PC-3 (cell line): ENCODE measurements at regions of chr14 and their contacts with region 1.

Region 1: GRCh38 chr14:36604757-36605505 is 22.5 kb upstream of the NKX2-8 start:
- DNase-seq: peak; percentile 90
- ATAC-seq: peak; percentile 84
- H3K4me3 ChIP-seq: no peak overlapping the region
- H3K27ac ChIP-seq: no peak overlapping the region
- H3K4me1 ChIP-seq: no peaks in the 10 kb centered on the region
- H3K27me3 ChIP-seq: peaks cover 42% of the 10 kb centered on the region
- CTCF ChIP-seq: peak; percentile 87

Region 2: DNA sequence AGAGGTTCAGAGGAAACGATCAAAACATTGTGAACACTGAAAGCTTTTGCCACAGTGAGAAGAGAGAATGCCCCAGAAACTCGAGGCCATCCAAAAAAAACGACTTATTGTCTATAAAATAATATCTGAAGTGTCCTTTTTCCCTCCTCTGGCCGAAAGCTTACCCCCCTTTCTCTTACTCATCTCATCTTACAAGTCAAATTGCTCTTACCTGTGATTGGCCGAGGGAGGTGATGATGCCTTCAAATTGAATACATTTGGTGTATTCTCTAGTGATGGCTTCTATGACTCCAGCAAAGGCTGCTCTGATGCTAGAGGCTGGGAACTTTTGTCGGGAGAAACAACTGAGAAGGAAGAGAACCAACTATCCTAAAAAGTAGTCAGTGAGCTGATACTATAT is 519.1 kb before region 1 on chr14:
- CTCF ChIA-PET with region 1: interaction called, 10 read pairs
- POLR2A ChIA-PET with region 1: no interaction called
- intact Hi-C with region 1: no loop called
- DNase-seq: no peak
- ATAC-seq: no peak
- H3K4me3 ChIP-seq: no peak overlapping the region
- H3K27ac ChIP-seq: no peak overlapping the region
- H3K4me1 ChIP-seq: peaks cover 1% of the 10 kb centered on the region; the same call in 1 of the 2 replicates
- H3K27me3 ChIP-seq: peaks cover 74% of the 10 kb centered on the region
- CTCF ChIP-seq: no peak

Region 3: GRCh38 chr14:36207500-36207899 is 397.4 kb before region 1 on chr14:
- CTCF ChIA-PET with region 1: interaction called, 8 read pairs
- POLR2A ChIA-PET with region 1: no interaction called
- intact Hi-C with region 1: loop called (anchors 5 kb)
- DNase-seq: peak; percentile 51
- ATAC-seq: peak; percentile 85
- H3K4me3 ChIP-seq: no peak overlapping the region
- H3K27ac ChIP-seq: no peak overlapping the region
- H3K4me1 ChIP-seq: no peaks in the 10 kb centered on the region
- H3K27me3 ChIP-seq: peaks cover 44% of the 10 kb centered on the region
- CTCF ChIP-seq: peak; percentile 75

Region 4: GRCh38 chr14:36553656-36554260 is 51.2 kb before region 1 on chr14:
- CTCF ChIA-PET with region 1: interaction called, 100 read pairs
- POLR2A ChIA-PET with region 1: no interaction called
- intact Hi-C with region 1: loop called (anchors 1 kb)
- DNase-seq: peak; percentile 72
- ATAC-seq: peak; percentile 75
- H3K4me3 ChIP-seq: no peak overlapping the region
- H3K27ac ChIP-seq: no peak overlapping the region
- H3K4me1 ChIP-seq: no peaks in the 10 kb centered on the region
- H3K27me3 ChIP-seq: peaks cover 13% of the 10 kb centered on the region
- CTCF ChIP-seq: peak; percentile 79

Region 5: DNA sequence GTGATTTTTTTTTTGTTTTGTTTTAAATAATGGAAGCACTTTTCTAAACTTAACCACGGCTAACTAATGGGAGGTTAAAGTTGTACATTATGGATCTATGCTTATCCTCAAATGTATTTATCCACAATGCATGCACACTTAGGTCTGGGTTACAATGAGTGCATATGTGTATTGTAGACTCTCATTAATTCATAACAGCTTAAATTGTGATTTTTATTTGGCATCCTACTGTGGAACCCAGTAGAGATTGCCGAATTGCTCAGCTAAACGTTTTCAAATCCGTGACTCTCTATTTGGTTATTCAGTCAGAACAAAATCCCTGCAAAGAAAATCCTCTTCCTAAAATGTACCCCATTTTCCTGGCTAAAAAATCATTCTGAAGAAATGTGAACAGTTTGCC is 323.5 kb after region 1 on chr14:
- CTCF ChIA-PET with region 1: interaction called, 11 read pairs
- POLR2A ChIA-PET with region 1: no interaction called
- intact Hi-C with region 1: no loop called
- DNase-seq: no peak
- ATAC-seq: no peak
- H3K4me3 ChIP-seq: no peak overlapping the region
- H3K27ac ChIP-seq: no peak overlapping the region
- H3K4me1 ChIP-seq: no peaks in the 10 kb centered on the region
- H3K27me3 ChIP-seq: no peaks in the 10 kb centered on the region
- CTCF ChIP-seq: no peak